ENCODE measurements at regions of chr2 and their contacts with region 1.

Region 1: DNA sequence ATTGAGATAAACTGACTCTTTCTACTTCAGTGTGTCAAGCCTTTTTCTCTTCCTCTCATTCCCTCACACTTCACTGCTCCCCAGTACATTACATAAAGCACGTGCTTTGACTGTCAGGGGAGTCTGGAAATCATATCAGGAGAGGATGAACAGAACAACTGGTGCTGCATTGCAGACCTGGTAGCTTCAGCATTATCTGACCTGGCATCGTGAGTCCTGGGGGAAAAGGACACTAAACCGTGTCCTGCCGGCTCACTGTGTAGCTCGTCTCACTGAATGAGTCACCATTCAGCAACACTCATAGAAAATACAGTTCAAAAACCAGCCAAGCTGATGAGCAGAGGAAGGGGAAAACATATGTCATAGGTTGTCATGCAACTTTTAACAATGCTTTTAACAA is 108.5 kb upstream of the UNC80 start:
- DNase-seq: no peak
- ATAC-seq: peak; percentile 86
- H3K4me3 ChIP-seq: no peak overlapping the region; a peak in 1 of 4 replicates
- H3K27ac ChIP-seq: no peak overlapping the region
- H3K4me1 ChIP-seq: peaks cover 0 to 13% of the 10 kb centered on the region in 2 experiments; a peak in 2 of 4 replicates
- H3K27me3 ChIP-seq: no peaks in the 10 kb centered on the region
- CTCF ChIP-seq: no peak
- POLR2A ChIP-seq: no peak
- RAD21 ChIP-seq: no peak

Region 2: DNA sequence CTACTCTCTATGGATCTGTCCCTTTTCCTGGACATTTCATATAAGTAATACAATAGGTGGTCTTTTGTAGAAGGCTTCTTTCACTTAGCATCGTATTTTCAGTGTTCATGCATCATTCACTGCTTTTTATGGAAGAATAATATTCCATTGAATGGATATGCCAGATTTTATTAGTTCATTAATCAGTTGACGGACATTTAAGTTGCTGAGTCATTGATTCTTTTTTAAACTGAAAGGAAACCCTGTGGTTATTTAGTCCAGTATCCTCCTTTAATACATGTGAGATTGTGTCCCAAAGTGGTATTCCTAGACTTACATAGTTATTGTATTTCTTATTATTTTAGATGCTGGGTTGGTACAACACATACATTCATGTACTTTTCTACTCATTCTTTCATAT is 53.6 kb before region 1 on chr2:
- CTCF ChIA-PET with region 1: no interaction called
- POLR2A ChIA-PET with region 1: no interaction called
- RAD21 ChIA-PET with region 1: no interaction called
- intact Hi-C with region 1: loop called (anchors 5 kb)
- DNase-seq: no peak
- ATAC-seq: no peak
- H3K4me3 ChIP-seq: no peak overlapping the region
- H3K27ac ChIP-seq: no peak overlapping the region
- H3K4me1 ChIP-seq: no peaks in the 10 kb centered on the region
- H3K27me3 ChIP-seq: no peaks in the 10 kb centered on the region
- CTCF ChIP-seq: no peak
- POLR2A ChIP-seq: no peak
- RAD21 ChIP-seq: no peak

Region 3: GRCh38 chr2:209790066-209790728 is 127.0 kb after region 1 on chr2:
- CTCF ChIA-PET with region 1: no interaction called
- POLR2A ChIA-PET with region 1: no interaction called
- RAD21 ChIA-PET with region 1: no interaction called
- intact Hi-C with region 1: no loop called
- DNase-seq: no peak
- ATAC-seq: no peak
- H3K4me3 ChIP-seq: no peak overlapping the region
- H3K27ac ChIP-seq: no peak overlapping the region
- H3K4me1 ChIP-seq: no peaks in the 10 kb centered on the region
- H3K27me3 ChIP-seq: no peaks in the 10 kb centered on the region
- CTCF ChIP-seq: no peak
- POLR2A ChIP-seq: no peak
- RAD21 ChIP-seq: no peak